AG04450 (cell line): ENCODE measurements at regions of chr6 and their contacts with region 1.

Region 1: DNA sequence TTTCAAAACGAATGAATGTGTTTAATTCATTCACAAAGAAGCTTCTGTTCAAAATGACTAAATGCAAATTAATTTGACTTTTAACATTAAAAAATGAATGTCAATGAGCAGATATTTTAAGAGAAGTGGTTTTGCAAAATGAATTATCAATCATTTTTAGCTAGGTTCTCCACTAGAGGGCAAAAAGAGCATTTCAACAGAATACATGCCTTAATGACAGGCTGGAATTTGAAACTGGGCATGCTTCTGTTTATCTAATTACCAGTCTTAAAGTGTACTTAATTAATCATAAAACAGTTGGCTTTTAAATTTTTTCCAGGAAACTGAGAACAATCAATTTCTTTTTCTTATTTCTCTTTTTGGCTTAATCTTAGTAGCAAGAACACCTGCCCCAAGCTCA is 63.8 kb upstream of the TINAG start:
- DNase-seq: no peak
- H3K4me3 ChIP-seq: no peak overlapping the region
- H3K27ac ChIP-seq: no peak overlapping the region
- H3K27me3 ChIP-seq: no peaks in the 10 kb centered on the region
- CTCF ChIP-seq: peak; percentile 70

Region 2: DNA sequence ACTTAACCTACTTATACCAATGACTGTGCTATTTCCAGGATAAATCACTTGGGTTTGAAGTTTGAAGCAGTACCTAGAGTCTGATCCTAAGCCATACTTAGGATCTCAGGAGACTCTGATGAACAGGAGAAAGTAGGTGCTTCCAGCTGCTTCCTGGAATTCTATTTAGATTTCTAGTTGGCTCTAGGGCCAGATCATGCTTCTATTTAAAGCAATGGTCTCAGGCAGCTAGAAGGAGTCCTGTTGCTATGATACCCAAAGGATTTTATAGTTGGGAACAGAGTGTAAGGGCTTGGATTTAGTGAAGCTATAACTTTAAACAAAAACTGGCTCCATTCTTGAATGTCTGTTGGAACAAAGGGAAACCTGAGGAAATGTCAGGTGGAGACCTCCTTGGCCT is 11.5 kb after region 1 on chr6:
- CTCF ChIA-PET with region 1: interaction called, 10 read pairs
- POLR2A ChIA-PET with region 1: no interaction called
- DNase-seq: no peak
- H3K4me3 ChIP-seq: no peak overlapping the region
- H3K27ac ChIP-seq: no peak overlapping the region
- H3K27me3 ChIP-seq: no peaks in the 10 kb centered on the region
- CTCF ChIP-seq: no peak

Region 3: GRCh38 chr6:54267798-54268197 is 23.4 kb after region 1 on chr6:
- CTCF ChIA-PET with region 1: interaction called, 11 read pairs
- POLR2A ChIA-PET with region 1: no interaction called
- DNase-seq: no peak
- H3K4me3 ChIP-seq: no peak overlapping the region
- H3K27ac ChIP-seq: no peak overlapping the region
- H3K27me3 ChIP-seq: no peaks in the 10 kb centered on the region
- CTCF ChIP-seq: peak; percentile 60

Region 4: GRCh38 chr6:54282186-54282585 is 37.8 kb after region 1 on chr6:
- CTCF ChIA-PET with region 1: no interaction called
- POLR2A ChIA-PET with region 1: no interaction called
- DNase-seq: peak; percentile 50
- H3K4me3 ChIP-seq: no peak overlapping the region
- H3K27ac ChIP-seq: no peak overlapping the region
- H3K27me3 ChIP-seq: no peaks in the 10 kb centered on the region
- CTCF ChIP-seq: no peak